Dendritic cell treated with granulocyte-macrophage colony-stimulating factor and Interleukin-4, amounts not matched to agents 40 ng/mL and 50 ng/mL, for 4 days (primary cell): ENCODE measurements at regions of chr19 and their contacts with region 1.

Region 1: GRCh38 chr19:45994989-45995714 is at the start of gene CCDC61:
- H3K4me3 Mint-ChIP-seq: no peak within 1 kb of the TSS
- H3K27ac Mint-ChIP-seq: no peak within 1 kb of the TSS
- H3K4me1 Mint-ChIP-seq: peaks cover 12% of the 10 kb centered on the region
- H3K27me3 Mint-ChIP-seq: peaks cover 17% of the 10 kb centered on the region

Region 2: GRCh38 chr19:45730389-45731288 is 264.5 kb before region 1 on chr19 and contains the start of gene FBXO46:
- intact Hi-C with region 1: loop called (anchors 5 kb)
- H3K4me3 Mint-ChIP-seq: peak within 1 kb of the TSS; percentile 97
- H3K27ac Mint-ChIP-seq: peak within 1 kb of the TSS; percentile 91
- H3K4me1 Mint-ChIP-seq: peaks cover 49% of the 10 kb centered on the region
- H3K27me3 Mint-ChIP-seq: no peaks in the 10 kb centered on the region

Region 3: DNA sequence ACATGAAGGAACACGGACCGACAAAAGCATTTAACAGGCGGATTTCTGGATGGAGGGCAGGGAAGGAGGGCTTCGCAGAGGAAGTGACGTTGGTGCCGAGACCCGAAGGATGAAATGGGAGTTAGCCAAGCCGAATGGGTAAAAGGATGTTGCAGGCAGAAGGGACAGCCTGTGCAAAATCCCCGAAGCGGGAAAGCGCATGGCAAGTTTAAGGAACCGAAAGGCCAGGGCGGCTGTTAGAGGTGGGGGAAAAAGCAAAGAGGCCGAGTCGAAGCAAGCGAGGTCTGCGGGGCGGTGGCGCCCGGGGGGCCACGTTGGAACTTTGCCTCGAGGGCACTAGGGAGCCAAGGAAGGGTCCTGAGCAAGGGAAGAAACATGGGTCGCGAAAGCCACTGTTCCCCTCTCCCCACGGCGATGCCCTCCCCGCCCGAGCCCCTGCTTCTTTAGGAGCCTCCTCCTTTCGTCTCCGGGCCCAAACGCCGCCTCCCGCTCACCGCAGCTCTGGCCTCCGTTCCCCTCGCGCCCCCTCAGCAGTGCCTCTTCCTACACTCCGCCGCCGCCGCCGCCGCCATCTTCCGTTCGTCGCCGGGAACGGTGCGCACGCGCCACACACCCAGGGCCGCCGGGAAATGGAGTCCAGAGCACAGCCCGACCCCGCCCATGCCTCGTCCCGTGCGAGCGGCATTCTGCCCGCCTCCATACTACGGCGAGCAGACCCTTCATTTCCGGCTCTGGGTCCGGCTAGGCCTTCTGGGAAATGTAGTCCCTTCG is 132.4 kb before region 1 on chr19 and contains the start of gene SYMPK:
- intact Hi-C with region 1: loop called (anchors 1 kb)
- H3K4me3 Mint-ChIP-seq: peak within 1 kb of the TSS; percentile 91
- H3K27ac Mint-ChIP-seq: peak within 1 kb of the TSS; percentile 90
- H3K4me1 Mint-ChIP-seq: peaks cover 40% of the 10 kb centered on the region
- H3K27me3 Mint-ChIP-seq: peaks cover 44% of the 10 kb centered on the region

Region 4: DNA sequence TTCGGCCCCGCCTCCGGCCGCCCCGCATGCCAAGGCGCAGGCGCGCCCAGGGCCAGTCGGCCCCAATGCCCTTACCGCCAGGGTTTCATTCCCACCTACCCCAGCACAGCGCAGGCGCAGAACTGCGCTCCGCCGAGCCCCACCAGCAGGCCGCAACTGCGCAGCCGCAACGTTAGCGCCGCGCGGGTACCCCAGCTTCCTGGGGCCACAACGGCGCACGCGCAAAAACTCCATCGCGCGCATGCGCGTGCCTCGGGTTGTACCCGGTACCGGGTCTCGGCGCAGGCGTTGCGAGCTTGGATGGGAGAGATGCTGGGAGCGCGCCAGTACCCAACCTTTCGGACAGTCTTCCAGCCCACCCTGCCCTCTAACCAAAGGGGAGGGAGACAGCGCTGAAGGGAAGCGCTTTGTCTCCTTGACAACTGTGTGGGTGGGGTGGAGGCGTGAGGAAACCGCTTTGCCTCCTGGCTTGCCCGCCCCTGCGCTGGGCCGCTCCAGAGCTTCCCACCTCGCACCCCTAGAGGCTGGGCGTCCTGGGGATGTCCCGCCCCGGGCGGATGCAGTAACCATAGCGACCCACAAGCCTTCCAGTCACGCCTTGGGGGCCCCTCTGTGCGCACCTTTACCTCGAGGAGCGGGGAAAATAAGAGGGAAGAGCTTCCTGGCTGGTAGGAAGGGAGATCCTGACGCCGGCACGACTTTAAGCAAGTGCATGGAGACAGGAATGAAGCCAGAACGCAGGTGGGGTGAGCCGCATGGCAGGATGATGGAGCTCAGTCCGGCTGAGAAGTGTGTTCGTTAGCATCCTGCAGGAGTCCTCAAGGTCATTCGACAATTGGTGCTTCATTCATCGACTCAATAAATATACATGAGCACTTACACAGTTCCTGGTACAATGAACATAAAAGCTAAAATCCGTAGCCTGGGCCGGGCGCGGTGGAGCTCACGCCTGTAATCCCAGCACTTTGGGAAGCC is 92.2 kb before region 1 on chr19:
- intact Hi-C with region 1: loop called (anchors 10 kb)
- H3K4me3 Mint-ChIP-seq: peak overlapping the region; percentile 97
- H3K27ac Mint-ChIP-seq: peak overlapping the region; percentile 83
- H3K4me1 Mint-ChIP-seq: peaks cover 27% of the 10 kb centered on the region
- H3K27me3 Mint-ChIP-seq: peaks cover 18% of the 10 kb centered on the region

Region 5: DNA sequence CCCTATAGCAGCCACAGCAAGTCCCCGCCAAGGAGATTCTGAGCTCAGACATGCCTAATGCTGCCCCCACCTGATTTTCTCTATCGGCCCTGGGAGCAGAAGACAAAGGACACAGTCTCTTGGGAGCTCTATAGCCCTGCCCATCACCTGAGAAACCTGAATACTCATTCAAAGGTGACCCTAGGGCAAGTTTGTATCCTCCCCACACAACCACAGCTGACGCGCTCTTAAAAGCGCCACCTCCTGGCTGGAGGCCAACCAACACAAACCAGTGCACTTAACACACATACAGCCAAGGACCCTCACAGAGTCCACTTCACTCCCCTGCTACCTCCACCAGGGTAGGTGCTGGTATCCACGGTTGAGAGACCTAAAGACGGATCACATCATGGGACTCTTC is 54.4 kb after region 1 on chr19:
- intact Hi-C with region 1: no loop called
- H3K4me3 Mint-ChIP-seq: no peak overlapping the region
- H3K27ac Mint-ChIP-seq: no peak overlapping the region
- H3K4me1 Mint-ChIP-seq: no peaks in the 10 kb centered on the region
- H3K27me3 Mint-ChIP-seq: peaks cover 70% of the 10 kb centered on the region